T-cell (primary cell): ENCODE measurements at regions of chr11 and their contacts with region 1.

Region 1: GRCh38 chr11:65652511-65653231 is 10.0 kb downstream of the RELA start:
- DNase-seq: peak; percentile 90 to 99 (median 94)
- ATAC-seq: peak; percentile 79 to 89 (median 88)
- H3K4me3 ChIP-seq: peak overlapping the region; percentile 60 to 73
- H3K4me3 Mint-ChIP-seq: peak overlapping the region; percentile 78 to 90 (median 87)
- H3K27ac ChIP-seq: peak overlapping the region; percentile 98
- H3K27ac Mint-ChIP-seq: peak overlapping the region; percentile 97
- H3K4me1 ChIP-seq: peaks cover 7 to 53% of the 10 kb centered on the region in 2 experiments
- H3K4me1 Mint-ChIP-seq: peaks cover 50 to 59% (median 52%) of the 10 kb centered on the region in 3 donors
- H3K27me3 ChIP-seq: no peaks in the 10 kb centered on the region
- H3K27me3 Mint-ChIP-seq: no peaks in the 10 kb centered on the region

Region 2: GRCh38 chr11:65637794-65638317 is 14.8 kb before region 1 on chr11 and contains the start of gene SIPA1:
- CTCF ChIA-PET with region 1: interaction called in 1 of 2 experiments, 13 read pairs
- POLR2A ChIA-PET with region 1: interaction called, 4 to 21 read pairs
- DNase-seq: peak in 34 of 35 experiments; percentile 34 to 89 (median 58)
- ATAC-seq: peak; percentile 58 to 76 (median 66)
- H3K4me3 ChIP-seq: peak within 1 kb of the TSS; percentile 93 to 96
- H3K4me3 Mint-ChIP-seq: peak within 1 kb of the TSS; percentile 89 to 95 (median 92)
- H3K27ac ChIP-seq: peak within 1 kb of the TSS; percentile 100
- H3K27ac Mint-ChIP-seq: peak within 1 kb of the TSS; percentile 94 to 96
- H3K4me1 ChIP-seq: peaks cover 20 to 76% of the 10 kb centered on the region in 2 experiments
- H3K4me1 Mint-ChIP-seq: peaks cover 47 to 57% (median 49%) of the 10 kb centered on the region in 3 donors
- H3K27me3 ChIP-seq: no peaks in the 10 kb centered on the region
- H3K27me3 Mint-ChIP-seq: no peaks in the 10 kb centered on the region
- total RNA-seq, gene SIPA1: 179 to 285 (median 200) TPM

Region 3: GRCh38 chr11:66607126-66607834 is 954.6 kb after region 1 on chr11:
- CTCF ChIA-PET with region 1: no interaction called
- POLR2A ChIA-PET with region 1: no interaction called
- DNase-seq: no peak
- ATAC-seq: no peak
- H3K4me3 ChIP-seq: no peak overlapping the region
- H3K4me3 Mint-ChIP-seq: no peak overlapping the region
- H3K27ac ChIP-seq: no peak overlapping the region
- H3K27ac Mint-ChIP-seq: no peak overlapping the region
- H3K4me1 ChIP-seq: no peaks in the 10 kb centered on the region
- H3K4me1 Mint-ChIP-seq: peaks cover 6 to 17% (median 9%) of the 10 kb centered on the region in 3 donors
- H3K27me3 ChIP-seq: no peaks in the 10 kb centered on the region
- H3K27me3 Mint-ChIP-seq: no peaks in the 10 kb centered on the region

Region 4: DNA sequence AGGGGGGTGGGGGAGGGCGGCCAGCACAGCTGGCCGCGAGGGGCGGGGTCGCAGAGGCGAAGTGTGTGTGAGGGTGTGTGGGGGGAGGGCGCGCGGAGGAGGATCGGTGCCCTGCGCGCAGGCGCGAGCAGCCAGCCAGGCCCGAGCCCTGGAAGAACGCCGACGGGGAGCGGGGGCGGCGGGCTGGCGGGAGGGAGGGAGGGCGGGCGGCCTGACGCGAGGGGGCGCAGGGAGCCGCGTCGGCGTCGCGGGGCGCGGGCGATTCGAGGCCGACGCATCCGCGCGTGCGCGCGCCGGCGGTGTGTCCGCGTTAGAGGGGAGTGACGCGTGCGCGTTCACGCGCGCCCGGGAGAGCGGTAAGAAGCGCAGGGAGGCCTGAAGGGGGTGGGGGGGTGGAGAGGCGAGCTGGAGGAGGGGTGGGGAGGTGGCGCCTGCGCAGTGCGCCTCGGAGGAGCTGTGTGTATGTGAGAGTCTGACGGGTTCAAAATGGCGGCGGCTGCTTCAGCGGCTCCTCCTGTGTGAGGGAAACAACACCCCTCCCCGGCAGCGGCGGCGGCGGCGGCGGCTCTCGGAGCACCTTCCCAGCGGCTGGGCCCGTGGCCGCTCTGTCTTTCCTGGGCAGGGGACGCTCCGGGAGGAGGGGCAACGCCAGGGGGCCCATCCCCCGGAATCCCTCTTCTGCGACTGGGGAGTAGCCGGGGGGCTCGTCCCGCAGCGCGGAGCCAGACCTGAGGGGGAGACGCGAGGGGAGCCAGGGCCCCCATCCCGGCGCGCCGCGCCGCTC is 1466.3 kb after region 1 on chr11 and contains the start of gene KDM2A:
- CTCF ChIA-PET with region 1: no interaction called
- POLR2A ChIA-PET with region 1: interaction called in 1 of 2 experiments, 13 read pairs
- DNase-seq: peak; percentile 94 to 100 (median 99)
- ATAC-seq: peak; percentile 82 to 84 (median 84)
- H3K4me3 ChIP-seq: peak within 1 kb of the TSS; percentile 83 to 92
- H3K4me3 Mint-ChIP-seq: peak within 1 kb of the TSS; percentile 95 to 99 (median 98)
- H3K27ac ChIP-seq: peak within 1 kb of the TSS; percentile 89
- H3K27ac Mint-ChIP-seq: peak within 1 kb of the TSS; percentile 87 to 92
- H3K4me1 ChIP-seq: peaks cover 18 to 24% of the 10 kb centered on the region in 2 experiments
- H3K4me1 Mint-ChIP-seq: peaks cover 36 to 43% (median 39%) of the 10 kb centered on the region in 3 donors
- H3K27me3 ChIP-seq: no peaks in the 10 kb centered on the region
- H3K27me3 Mint-ChIP-seq: no peaks in the 10 kb centered on the region
- total RNA-seq, gene KDM2A: 157 to 333 (median 178) TPM